WTC11 (cell line): ENCODE measurements at regions of chr7 and their contacts with region 1.

Region 1: DNA sequence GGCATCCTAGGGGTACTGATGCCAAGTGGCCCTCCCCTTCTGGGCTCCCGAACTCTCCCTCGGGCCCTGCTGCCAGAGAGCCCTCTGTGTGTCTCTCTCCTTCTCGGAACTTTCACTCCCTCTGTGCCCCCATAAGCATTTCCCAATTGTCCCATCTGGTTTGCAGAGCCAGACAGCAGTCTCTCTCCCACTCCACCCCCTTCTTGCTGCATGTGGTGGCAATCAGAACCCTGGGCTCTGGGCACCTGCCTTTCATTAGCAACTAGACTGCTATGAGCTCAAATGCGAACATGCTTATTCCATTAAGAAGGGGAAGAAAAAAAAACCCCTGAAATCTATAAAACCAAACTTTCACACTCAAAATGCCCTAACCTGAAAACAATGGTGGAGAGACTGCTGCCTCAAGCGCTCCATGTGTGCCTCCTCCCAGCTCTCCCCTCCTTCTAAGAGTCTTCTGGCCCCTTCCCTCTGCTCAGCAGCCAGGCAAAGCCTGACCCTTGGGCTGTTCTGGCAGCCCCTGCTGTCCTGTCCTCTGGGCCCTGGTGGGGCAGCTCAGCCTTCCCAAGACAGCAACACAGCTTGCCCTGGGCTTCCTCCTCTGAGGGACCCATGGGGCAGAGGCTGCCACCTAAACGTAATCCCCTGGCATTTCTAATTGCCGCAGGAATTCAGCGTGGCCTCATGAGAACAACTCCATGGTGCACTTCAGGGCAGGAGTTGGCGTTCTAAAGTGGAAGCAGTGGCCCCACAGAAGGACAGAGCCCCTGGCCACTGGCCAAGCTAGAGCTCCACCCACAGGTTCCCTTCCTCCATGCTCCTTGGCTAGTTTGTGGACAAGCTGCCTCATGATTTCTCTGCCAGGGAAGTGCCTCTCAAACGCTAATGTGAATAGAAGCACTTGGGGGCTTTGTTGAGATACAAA is 415.4 kb downstream of the PLXNA4 start:
- DNase-seq: no peak
- ATAC-seq: no peak
- H3K4me3 Mint-ChIP-seq: no peak overlapping the region
- H3K27ac Mint-ChIP-seq: no peak overlapping the region
- H3K4me1 Mint-ChIP-seq: peaks cover 21% of the 10 kb centered on the region
- H3K27me3 Mint-ChIP-seq: no peaks in the 10 kb centered on the region; the same call in none of the 2 replicates
- CTCF ChIP-seq: no peak

Region 2: GRCh38 chr7:131919920-131920709 is 240.8 kb before region 1 on chr7:
- CTCF ChIA-PET with region 1: no interaction called
- POLR2A ChIA-PET with region 1: no interaction called
- DNase-seq: peak; percentile 24
- ATAC-seq: no peak; the same call in none of the 2 replicates
- H3K4me3 Mint-ChIP-seq: no peak overlapping the region
- H3K27ac Mint-ChIP-seq: no peak overlapping the region
- H3K4me1 Mint-ChIP-seq: 0 out of 2 replicates have a peak, but pooled peaks cover 5% of the 10 kb centered on the region
- H3K27me3 Mint-ChIP-seq: no peaks in the 10 kb centered on the region
- CTCF ChIP-seq: no peak

Region 3: GRCh38 chr7:132177708-132178399 is 17.0 kb after region 1 on chr7:
- CTCF ChIA-PET with region 1: no interaction called
- POLR2A ChIA-PET with region 1: no interaction called
- DNase-seq: no peak
- ATAC-seq: no peak
- H3K4me3 Mint-ChIP-seq: no peak overlapping the region
- H3K27ac Mint-ChIP-seq: no peak overlapping the region
- H3K4me1 Mint-ChIP-seq: peaks cover 3% of the 10 kb centered on the region; the same call in 1 of the 2 replicates
- H3K27me3 Mint-ChIP-seq: no peaks in the 10 kb centered on the region
- CTCF ChIP-seq: no peak

Region 4: DNA sequence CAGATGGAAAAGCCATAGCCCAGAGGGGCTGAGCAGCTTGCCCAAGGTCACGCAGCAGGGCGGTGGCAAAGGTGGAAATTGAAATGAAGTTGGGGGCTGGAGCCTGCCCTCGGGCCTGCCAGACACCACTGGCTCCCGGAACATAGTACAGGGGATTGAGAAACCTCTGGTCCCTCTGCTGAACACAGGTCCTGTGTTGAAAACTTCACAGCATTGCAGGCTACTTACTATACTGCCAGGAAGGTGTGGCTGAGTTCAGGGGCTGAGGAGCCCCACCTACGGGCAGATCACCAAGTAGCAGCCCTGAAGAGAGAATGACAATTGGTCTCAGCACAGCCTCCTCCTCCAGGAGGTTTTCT is 88.7 kb after region 1 on chr7:
- CTCF ChIA-PET with region 1: interaction called, 13 read pairs
- POLR2A ChIA-PET with region 1: interaction called, 3 read pairs
- DNase-seq: peak; percentile 51
- ATAC-seq: peak; percentile 93
- H3K4me3 Mint-ChIP-seq: no peak overlapping the region
- H3K27ac Mint-ChIP-seq: no peak overlapping the region
- H3K4me1 Mint-ChIP-seq: peaks cover 34% of the 10 kb centered on the region
- H3K27me3 Mint-ChIP-seq: peaks cover 2% of the 10 kb centered on the region; the same call in 1 of the 2 replicates
- CTCF ChIP-seq: no peak

Region 5: DNA sequence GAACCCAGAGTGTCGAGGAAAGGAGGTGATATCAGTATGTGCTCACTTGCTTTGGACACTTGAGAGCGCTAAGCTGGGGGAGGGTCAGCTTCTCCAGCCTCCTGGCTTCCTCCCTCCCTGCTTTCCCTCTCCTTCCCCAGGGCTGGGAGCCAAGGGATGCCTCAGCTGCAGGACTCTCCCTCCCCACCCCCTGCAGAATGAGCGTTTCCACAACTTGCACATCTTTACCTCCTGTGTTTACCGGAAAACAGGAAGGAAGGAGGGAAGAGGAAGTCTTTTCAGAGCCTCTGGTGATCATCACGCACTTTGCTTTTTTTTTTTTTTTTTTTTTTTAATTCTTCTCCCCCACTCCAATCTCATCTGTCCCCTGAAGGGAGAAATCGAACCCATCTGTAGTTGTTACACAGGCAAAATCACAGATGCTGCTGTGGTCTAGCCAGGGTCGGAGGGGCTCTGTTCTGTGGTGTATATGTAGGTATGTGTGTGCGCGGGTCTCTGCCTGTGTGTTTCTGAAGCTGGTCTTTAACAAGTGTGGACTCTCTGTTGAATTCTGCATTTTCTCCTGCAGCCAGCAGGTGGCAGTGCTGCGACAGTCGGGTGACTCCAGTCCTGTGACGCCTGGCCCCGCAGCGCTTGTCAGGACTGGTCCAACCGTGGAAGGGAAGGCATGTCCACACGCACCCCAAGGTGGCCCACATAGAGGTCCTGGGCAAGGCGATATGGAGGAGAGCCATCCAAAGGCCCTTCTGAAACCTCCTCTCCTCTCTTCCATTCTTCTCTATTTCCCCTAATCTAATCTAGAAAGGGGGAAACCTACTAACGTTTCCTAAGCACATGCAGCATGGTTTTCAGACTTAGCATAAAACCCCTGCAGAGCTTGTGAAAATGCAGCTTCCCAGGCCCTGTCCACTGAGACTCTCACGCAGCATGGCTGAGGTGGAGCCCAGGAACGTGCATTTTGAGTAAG is 157.8 kb after region 1 on chr7:
- CTCF ChIA-PET with region 1: no interaction called
- POLR2A ChIA-PET with region 1: no interaction called
- DNase-seq: peak; percentile 87
- ATAC-seq: peak; percentile 95
- H3K4me3 Mint-ChIP-seq: peak overlapping the region; percentile 62
- H3K27ac Mint-ChIP-seq: no peak overlapping the region
- H3K4me1 Mint-ChIP-seq: peaks cover 17% of the 10 kb centered on the region
- H3K27me3 Mint-ChIP-seq: peaks cover 11% of the 10 kb centered on the region
- CTCF ChIP-seq: peak; percentile 73